Activated T-helper 2 cell treated with anti-CD3 and anti-CD28 coated beads, Interferon-gamma antibody, Interleukin-2, Interleukin-4, amounts not matched to agents 10 μg/mL and 5 μg/mL and 100 μg/mL, durations not matched to agents 14 hours and 24 hours and 36 hours (primary cell): ENCODE measurements at regions of chr12 and their contacts with region 1.

Region 1: DNA sequence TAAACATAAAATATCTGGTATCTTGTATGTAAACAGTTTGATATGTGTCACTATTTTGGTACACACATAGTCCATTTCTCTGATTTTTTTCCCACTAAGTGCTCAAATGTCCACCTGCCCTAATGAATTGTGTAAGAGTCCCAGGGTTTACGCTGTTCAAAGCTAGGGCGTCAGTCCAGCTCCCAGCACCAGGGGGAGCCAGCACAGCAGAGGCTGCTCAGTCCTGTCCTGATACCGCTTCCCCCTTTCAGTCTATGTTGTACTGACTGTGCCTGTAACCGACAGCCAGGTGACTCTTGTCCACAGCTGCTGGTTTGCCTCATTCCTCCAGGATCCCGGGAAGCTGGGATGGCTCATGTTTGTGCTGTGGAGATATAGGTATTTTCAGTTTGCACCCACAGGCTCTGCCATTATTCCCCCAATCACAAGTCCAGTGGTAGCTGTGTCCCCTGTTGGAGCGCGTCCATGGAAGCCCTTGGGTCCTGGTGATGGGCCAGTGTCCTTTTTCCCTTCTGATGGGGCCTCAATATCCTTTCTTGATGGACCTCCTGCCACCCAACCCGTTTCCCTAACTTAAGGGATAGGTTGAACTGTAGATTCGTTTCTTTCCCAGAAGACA is 242.0 kb downstream of the NEDD1 start:
- DNase-seq: peak; percentile 29
- H3K4me3 Mint-ChIP-seq: no peak overlapping the region
- H3K27ac Mint-ChIP-seq: no peak overlapping the region
- H3K4me1 Mint-ChIP-seq: peaks cover 3% of the 10 kb centered on the region
- H3K27me3 Mint-ChIP-seq: peaks cover 2% of the 10 kb centered on the region

Region 2: GRCh38 chr12:97308576-97309198 is 159.6 kb after region 1 on chr12:
- intact Hi-C with region 1: loop called (anchors 1 kb)
- DNase-seq: no peak
- H3K4me3 Mint-ChIP-seq: no peak overlapping the region
- H3K27ac Mint-ChIP-seq: no peak overlapping the region
- H3K4me1 Mint-ChIP-seq: no peaks in the 10 kb centered on the region
- H3K27me3 Mint-ChIP-seq: peaks cover 8% of the 10 kb centered on the region

Region 3: GRCh38 chr12:97426492-97427116 is 277.6 kb after region 1 on chr12:
- intact Hi-C with region 1: no loop called
- DNase-seq: no peak
- H3K4me3 Mint-ChIP-seq: no peak overlapping the region
- H3K27ac Mint-ChIP-seq: no peak overlapping the region
- H3K4me1 Mint-ChIP-seq: no peaks in the 10 kb centered on the region
- H3K27me3 Mint-ChIP-seq: no peaks in the 10 kb centered on the region